Panc1 (cell line): ENCODE measurements at regions of chr11 and their contacts with region 1.

Region 1: GRCh38 chr11:64317957-64318693 is at the start of gene PRDX5:
- DNase-seq: no peak
- ATAC-seq: peak; percentile 87
- H3K4me3 ChIP-seq: peak within 1 kb of the TSS; percentile 74 to 77
- H3K27ac ChIP-seq: peak within 1 kb of the TSS; percentile 100
- H3K4me1 ChIP-seq: peaks cover 48% of the 10 kb centered on the region
- H3K27me3 ChIP-seq: no peaks in the 10 kb centered on the region
- CTCF ChIP-seq: no peak; the same call in 1 of the 2 replicates
- total RNA-seq, gene PRDX5: 492 TPM

Region 2: GRCh38 chr11:64102005-64102738 is 216.0 kb before region 1 on chr11:
- CTCF ChIA-PET with region 1: no interaction called
- POLR2A ChIA-PET with region 1: no interaction called
- in situ Hi-C with region 1: no loop called
- intact Hi-C with region 1: no loop called
- DNase-seq: no peak
- ATAC-seq: no peak
- H3K4me3 ChIP-seq: no peak overlapping the region
- H3K27ac ChIP-seq: no peak overlapping the region
- H3K4me1 ChIP-seq: no peaks in the 10 kb centered on the region
- H3K27me3 ChIP-seq: no peaks in the 10 kb centered on the region
- CTCF ChIP-seq: no peak

Region 3: DNA sequence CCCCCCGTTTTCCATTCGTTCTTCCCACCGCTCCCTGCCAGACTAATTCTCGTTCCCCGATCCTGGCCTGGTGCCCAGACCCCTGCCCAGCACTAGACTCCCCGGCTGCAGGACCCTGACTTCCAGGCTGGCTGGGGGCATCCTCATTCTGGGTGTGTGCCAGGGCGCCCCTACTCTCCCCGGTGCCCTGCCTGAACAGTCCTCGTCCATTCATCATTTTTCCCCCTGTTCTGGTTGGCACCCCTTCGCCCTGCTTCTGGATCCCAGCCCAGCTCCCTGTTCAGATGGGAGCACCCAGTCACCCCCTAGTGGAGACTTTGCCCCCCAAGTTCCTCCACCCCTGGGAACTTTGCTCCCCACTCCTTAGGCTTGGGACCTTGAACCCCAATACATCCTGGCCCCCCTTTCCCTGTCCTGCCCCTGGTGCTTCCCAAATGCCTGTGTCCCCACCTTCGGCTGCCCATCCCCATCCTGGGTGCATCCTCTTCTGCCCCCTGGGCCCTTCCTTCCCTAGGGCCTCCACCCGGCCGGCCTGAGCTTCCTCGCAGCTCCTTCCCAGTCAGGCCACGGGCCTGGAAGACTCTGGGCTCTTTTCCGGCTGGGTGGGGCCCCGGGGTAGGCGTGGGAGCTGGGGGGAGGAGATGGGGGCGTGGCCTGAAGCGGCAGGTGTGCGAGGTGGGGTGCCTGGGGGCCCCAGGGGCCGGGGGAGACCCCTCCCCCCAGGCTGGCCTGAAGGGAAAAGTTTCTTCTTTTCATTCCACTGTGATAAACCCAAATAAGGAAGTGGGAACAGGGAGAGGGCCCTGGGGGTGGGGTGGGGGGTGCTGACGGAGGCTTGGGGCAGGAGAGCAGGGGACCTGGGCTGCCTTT is 65.9 kb before region 1 on chr11:
- CTCF ChIA-PET with region 1: interaction called, 12 read pairs
- POLR2A ChIA-PET with region 1: no interaction called
- in situ Hi-C with region 1: no loop called
- intact Hi-C with region 1: no loop called
- DNase-seq: no peak
- ATAC-seq: peak; percentile 50
- H3K4me3 ChIP-seq: peak overlapping the region; percentile 84 to 90
- H3K27ac ChIP-seq: peak overlapping the region; percentile 89
- H3K4me1 ChIP-seq: peaks cover 41% of the 10 kb centered on the region
- H3K27me3 ChIP-seq: no peaks in the 10 kb centered on the region
- CTCF ChIP-seq: no peak

Region 4: DNA sequence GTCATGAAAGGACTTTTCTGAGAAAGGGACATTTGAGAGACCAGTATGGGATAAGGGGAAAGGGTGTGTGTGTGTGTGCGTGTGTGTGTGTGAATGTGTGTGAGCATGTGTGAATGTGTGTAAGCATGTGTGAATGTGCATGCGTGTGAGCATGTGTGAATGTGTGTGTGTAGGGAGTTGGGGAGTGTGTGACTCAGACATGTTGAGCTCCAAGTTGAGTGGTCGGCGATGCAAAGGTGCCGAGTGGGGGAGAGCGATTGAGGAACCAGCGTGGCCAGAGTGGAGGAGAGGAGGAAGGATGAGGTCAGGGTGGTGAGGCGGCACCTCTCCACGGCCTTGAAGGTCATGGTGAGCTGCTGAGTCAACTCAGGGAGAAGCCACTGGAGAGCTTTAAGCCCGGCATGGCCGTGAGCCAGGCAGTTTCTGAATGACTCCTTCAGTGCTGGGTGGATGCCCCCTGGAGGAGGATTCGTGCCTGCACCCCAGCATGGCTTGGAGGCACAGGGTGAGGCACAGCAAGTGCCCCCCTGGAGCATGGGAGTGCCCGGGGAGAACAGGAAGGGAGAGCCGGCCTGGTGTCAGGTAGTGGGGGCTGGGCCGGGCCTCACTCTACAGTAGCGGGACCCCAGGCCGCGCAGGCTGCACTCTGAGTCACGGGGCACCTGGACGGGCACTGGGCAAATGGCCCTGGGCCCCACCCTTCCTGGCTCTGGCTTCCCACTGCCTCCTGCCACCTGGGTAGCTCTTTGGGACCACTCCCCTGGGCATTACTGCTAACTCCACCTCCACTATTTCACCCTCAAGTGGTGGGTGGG is 13.6 kb after region 1 on chr11:
- CTCF ChIA-PET with region 1: interaction called, 16 read pairs
- POLR2A ChIA-PET with region 1: interaction called, 12 read pairs
- in situ Hi-C with region 1: no loop called
- intact Hi-C with region 1: no loop called
- DNase-seq: peak; percentile 80
- ATAC-seq: peak; percentile 86
- H3K4me3 ChIP-seq: peak overlapping the region in 1 of 2 experiments; percentile 28; a peak in 2 of 4 replicates
- H3K27ac ChIP-seq: peak overlapping the region; percentile 61
- H3K4me1 ChIP-seq: peaks cover 26% of the 10 kb centered on the region
- H3K27me3 ChIP-seq: no peaks in the 10 kb centered on the region
- CTCF ChIP-seq: no peak; the same call in 1 of the 2 replicates

Region 5: GRCh38 chr11:64341851-64342791 is 24.0 kb after region 1 on chr11:
- CTCF ChIA-PET with region 1: interaction called, 15 read pairs
- POLR2A ChIA-PET with region 1: interaction called, 5 read pairs
- in situ Hi-C with region 1: no loop called
- intact Hi-C with region 1: no loop called
- DNase-seq: peak; percentile 43
- ATAC-seq: peak; percentile 95
- H3K4me3 ChIP-seq: peak overlapping the region; percentile 38 to 60
- H3K27ac ChIP-seq: peak overlapping the region; percentile 78
- H3K4me1 ChIP-seq: peaks cover 22% of the 10 kb centered on the region
- H3K27me3 ChIP-seq: no peaks in the 10 kb centered on the region
- CTCF ChIP-seq: peak; percentile 47; the same call in 1 of the 2 replicates

Region 6: DNA sequence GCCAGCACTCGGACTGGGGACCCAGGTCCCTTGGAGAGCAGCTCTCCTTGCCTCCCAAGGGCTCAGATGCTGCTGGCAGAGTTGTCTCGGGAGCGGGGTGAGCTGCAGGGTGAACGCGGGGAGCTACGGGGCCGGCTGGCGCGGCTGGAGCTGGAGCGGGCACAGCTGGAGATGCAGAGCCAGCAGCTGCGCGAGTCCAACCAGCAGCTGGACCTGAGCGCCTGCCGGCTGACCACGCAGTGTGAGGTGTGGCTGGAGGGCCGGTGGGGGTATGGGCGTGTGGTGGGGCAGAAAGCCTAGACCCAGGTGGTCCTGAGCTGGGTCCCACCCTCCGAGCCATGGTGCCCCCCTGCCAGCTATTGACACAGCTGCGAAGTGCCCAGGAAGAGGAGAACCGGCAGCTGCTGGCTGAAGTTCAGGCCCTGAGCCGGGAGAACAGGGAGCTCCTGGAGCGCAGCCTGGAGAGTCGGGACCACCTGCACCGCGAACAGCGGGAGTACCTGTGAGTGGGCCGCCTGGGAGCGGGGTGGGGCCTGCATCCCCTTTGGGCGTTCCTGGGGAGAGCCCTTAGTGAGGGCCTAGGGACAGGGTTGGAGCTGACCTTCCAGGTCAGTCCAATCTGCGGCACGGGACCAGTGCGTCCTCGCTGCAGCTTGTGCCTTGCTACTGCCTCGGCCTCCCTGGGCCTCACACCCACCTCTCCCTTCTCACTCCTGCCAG is 35.0 kb after region 1 on chr11:
- CTCF ChIA-PET with region 1: interaction called, 21 read pairs
- POLR2A ChIA-PET with region 1: interaction called, 5 read pairs
- in situ Hi-C with region 1: no loop called
- intact Hi-C with region 1: loop called (anchors 1 kb)
- DNase-seq: no peak
- ATAC-seq: no peak
- H3K4me3 ChIP-seq: no peak overlapping the region
- H3K27ac ChIP-seq: no peak overlapping the region
- H3K4me1 ChIP-seq: peaks cover 53% of the 10 kb centered on the region
- H3K27me3 ChIP-seq: no peaks in the 10 kb centered on the region
- CTCF ChIP-seq: no peak